ENCODE measurements at regions of chr1 and their contacts with region 1.

Region 1: DNA sequence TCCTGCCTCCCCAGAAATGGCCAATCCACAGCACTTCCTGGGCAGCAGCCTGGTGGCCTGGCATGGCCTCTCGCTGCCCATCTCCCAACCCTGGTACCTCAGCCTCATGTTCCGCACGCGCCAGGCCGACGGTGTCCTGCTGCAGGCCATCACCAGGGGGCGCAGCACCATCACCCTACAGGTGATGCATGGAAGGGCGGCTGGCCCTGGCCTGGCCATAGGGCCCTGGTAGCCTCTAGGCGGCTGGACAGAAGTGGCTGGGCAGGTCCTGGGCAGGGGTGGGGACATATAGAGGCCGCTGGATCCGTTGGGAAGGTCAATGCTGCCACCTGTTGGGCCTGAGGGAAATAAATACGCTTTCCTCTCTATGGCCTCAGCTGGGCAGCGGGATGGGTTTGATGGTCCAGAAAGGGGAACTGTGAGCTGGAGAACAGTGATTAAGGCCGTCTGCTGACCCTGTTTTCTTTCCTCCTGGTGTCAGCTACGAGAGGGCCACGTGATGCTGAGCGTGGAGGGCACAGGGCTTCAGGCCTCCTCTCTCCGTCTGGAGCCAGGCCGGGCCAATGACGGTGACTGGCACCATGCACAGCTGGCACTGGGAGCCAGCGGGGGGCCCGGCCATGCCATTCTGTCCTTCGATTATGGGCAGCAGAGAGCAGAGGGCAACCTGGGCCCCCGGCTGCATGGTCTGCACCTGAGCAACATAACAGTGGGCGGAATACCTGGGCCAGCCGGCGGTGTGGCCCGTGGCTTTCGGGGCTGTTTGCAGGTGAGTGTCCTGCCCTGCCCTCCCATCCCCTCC is 14.5 kb downstream of the CELSR2 start:
- DNase-seq: peak; percentile 78 to 85 (median 79)
- H3K4me3 ChIP-seq: no peak overlapping the region
- H3K4me3 Mint-ChIP-seq: no peak overlapping the region
- H3K27ac ChIP-seq: no peak overlapping the region
- H3K27ac Mint-ChIP-seq: peak overlapping the region in 1 of 7 donors; percentile 32
- H3K4me1 ChIP-seq: peaks cover 5 to 7% of the 10 kb centered on the region in 2 donors
- H3K4me1 Mint-ChIP-seq: peaks cover 6% of the 10 kb centered on the region
- H3K27me3 ChIP-seq: no peaks in the 10 kb centered on the region
- H3K27me3 Mint-ChIP-seq: peaks cover 0 to 9% (median 8%) of the 10 kb centered on the region in 3 donors
- CTCF ChIP-seq: peak; percentile 97

Region 2: DNA sequence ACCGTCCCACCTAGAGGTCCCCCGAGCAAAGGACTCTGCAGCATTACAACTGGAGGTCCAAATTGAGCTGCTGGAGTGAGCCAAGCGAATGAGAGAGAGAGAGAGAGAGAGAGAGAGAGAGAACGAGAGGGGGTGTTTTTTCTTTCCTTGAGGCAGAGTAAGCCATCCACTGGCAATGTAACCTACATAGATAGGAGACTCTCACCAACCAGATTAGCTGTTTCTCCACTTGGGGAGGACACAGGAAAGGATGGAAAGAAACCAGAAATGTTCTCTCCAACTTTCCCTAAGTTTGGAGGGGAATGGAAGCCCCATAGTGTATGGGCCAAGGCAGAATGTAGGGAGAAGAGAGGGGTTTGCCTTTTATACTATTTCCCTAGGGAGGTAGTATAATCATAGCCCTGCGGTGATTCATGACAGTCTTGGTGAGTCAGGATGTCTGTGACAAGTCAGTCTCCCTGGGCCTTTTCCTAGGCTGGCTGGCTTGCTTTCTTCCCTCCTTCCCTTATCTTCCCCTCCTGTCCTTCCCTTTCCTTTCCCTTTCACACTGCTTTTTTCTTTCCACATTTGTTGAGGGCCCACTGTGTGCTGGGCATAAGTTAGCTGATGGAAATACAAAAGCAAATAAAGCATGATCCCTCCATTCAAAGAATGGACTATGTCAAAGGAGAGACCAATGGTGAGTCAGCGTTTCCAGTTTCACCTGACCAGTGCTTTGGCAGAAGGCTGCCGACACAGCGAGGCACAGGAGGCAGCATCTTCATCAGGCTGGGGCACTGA is 544.0 kb before region 1 on chr1:
- intact Hi-C with region 1: no loop called
- DNase-seq: peak in 1 of 3 donors; percentile 22
- H3K4me3 ChIP-seq: no peak overlapping the region
- H3K4me3 Mint-ChIP-seq: no peak overlapping the region
- H3K27ac ChIP-seq: no peak overlapping the region
- H3K27ac Mint-ChIP-seq: no peak overlapping the region
- H3K4me1 ChIP-seq: no peaks in the 10 kb centered on the region
- H3K4me1 Mint-ChIP-seq: peaks cover 2% of the 10 kb centered on the region
- H3K27me3 ChIP-seq: no peaks in the 10 kb centered on the region
- H3K27me3 Mint-ChIP-seq: peaks cover 0 to 3% (median 2%) of the 10 kb centered on the region in 3 donors
- CTCF ChIP-seq: no peak

Region 3: DNA sequence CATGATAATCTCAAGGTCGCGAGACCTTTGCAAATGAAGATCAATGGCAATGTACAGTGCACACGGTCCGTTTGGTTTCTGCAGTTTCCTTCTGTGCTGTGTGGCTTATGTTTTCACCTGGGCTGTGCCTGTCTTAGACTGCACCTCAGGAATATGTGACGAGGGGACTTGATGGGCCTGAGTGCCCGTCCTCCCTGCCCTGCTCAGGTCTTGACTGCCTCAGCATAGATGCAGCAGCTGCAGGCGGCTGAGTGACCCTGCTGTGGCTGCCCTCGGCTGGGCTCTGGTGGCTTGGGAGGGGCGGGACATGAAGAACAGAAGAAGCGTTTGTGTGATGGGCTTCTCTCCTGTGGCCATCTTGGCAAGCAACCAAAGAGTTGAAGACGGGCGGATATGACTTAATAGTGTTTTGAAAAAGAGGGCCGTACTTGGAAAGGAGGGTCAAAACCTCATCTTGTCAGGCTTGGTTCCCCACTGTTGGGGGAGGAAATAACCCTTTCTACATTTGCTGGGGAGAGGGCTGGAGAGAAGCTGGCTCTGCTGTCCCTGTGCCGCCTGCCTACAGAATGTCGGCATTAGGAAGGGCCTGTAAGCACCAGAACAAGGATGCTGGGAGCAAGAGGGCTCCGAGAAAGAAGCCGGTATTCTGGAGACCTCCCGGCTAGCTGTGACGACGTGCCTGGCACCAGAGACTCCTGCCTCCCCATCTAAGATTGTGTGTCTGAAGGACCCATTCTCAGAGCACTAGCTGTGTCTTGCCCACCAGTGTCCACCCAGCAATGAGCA is 36.0 kb after region 1 on chr1:
- intact Hi-C with region 1: loop called in 1 of 2 experiments (anchors 5 kb)
- DNase-seq: no peak
- H3K4me3 ChIP-seq: no peak overlapping the region
- H3K4me3 Mint-ChIP-seq: no peak overlapping the region
- H3K27ac ChIP-seq: no peak overlapping the region
- H3K27ac Mint-ChIP-seq: peak overlapping the region in 3 of 7 donors; percentile 7 to 70 (median 52)
- H3K4me1 ChIP-seq: peaks cover 26 to 30% of the 10 kb centered on the region in 2 donors
- H3K4me1 Mint-ChIP-seq: peaks cover 36% of the 10 kb centered on the region
- H3K27me3 ChIP-seq: no peaks in the 10 kb centered on the region
- H3K27me3 Mint-ChIP-seq: peaks cover 5 to 11% (median 5%) of the 10 kb centered on the region in 3 donors
- CTCF ChIP-seq: no peak

Measured in CD14-positive monocyte (primary cell).